CD4-positive, alpha-beta memory T cell (primary cell): ENCODE measurements at regions of chr1 and their contacts with region 1.

Region 1: DNA sequence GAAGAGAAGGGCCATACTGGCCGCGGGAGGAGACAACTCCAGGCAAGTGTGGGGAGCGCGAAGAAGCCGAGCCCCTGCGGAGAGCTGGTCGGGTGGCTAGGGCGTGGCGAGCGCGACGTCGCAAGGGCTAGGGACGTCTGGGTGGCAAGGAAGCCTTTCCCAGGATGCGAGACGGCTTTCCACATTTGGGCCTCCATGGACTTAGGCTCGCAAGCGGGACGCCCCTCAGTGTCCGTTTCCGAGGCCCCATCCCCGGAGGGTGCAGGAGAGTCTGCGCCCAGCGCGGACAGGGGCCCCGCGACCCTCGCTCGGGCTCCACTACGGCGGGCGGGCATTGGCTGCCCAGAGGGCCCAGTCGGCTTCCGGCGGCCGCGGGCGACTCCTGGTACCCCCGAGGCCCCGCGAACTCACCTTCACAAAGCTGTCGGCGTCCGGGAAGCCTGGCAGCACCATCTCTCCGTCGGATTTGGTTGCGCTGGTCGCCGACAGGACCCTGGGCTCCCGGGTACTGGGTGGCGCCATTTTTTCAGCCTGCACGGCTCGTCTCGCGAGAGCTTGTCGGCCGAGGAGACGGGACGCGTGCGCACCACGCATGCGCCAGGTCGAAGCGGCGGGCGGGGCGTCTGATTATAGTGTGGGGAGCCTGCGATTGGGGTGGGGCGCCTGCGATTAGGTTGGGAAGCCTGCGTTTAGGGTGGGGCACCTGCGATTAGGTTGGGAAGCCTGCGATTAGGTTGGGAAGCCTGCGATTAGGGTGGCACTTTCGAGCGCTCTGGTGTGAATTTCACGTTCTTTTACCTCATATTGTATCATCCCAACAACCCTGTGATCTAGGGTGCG is at the start of gene EXOSC10:
- DNase-seq: peak; percentile 93 to 95 (median 94)
- H3K4me3 ChIP-seq: peak within 1 kb of the TSS; percentile 93 to 96
- H3K4me3 Mint-ChIP-seq: peak within 1 kb of the TSS; percentile 92 to 98 (median 96)
- H3K27ac ChIP-seq: peak within 1 kb of the TSS; percentile 89
- H3K27ac Mint-ChIP-seq: peak within 1 kb of the TSS; percentile 89 to 97 (median 96)
- H3K4me1 ChIP-seq: peaks cover 18% of the 10 kb centered on the region
- H3K4me1 Mint-ChIP-seq: peaks cover 8 to 23% (median 12%) of the 10 kb centered on the region in 4 donors
- H3K27me3 ChIP-seq: no peaks in the 10 kb centered on the region
- H3K27me3 Mint-ChIP-seq: no peaks in the 10 kb centered on the region
- total RNA-seq, gene EXOSC10: 78.9 to 84.4 TPM

Region 2: GRCh38 chr1:11059990-11060830 is 39.3 kb before region 1 on chr1 and contains the start of gene SRM:
- CTCF ChIA-PET with region 1: interaction called, 3 read pairs
- POLR2A ChIA-PET with region 1: interaction called, 27 read pairs
- intact Hi-C with region 1: loop called (anchors 1 kb)
- DNase-seq: peak; percentile 87 to 93 (median 90)
- H3K4me3 ChIP-seq: peak within 1 kb of the TSS; percentile 57 to 76
- H3K4me3 Mint-ChIP-seq: peak within 1 kb of the TSS; percentile 92 to 96 (median 94)
- H3K27ac ChIP-seq: peak within 1 kb of the TSS; percentile 65
- H3K27ac Mint-ChIP-seq: peak within 1 kb of the TSS; percentile 86 to 96 (median 93)
- H3K4me1 ChIP-seq: peaks cover 26% of the 10 kb centered on the region
- H3K4me1 Mint-ChIP-seq: peaks cover 15 to 42% (median 30%) of the 10 kb centered on the region in 4 donors
- H3K27me3 ChIP-seq: no peaks in the 10 kb centered on the region
- H3K27me3 Mint-ChIP-seq: no peaks in the 10 kb centered on the region
- total RNA-seq, gene SRM: 53.1 to 55.1 TPM